ENCODE measurements at regions of chr3 and their contacts with region 1.

Region 1: GRCh38 chr3:194344012-194344411 is 7.1 kb downstream of the CPN2 start:
- DNase-seq: peak; percentile 28 to 82 (median 60)
- ATAC-seq: peak; percentile 59 to 65 (median 64)
- H3K4me3 ChIP-seq: no peak overlapping the region
- H3K4me3 Mint-ChIP-seq: no peak overlapping the region
- H3K27ac ChIP-seq: no peak overlapping the region
- H3K27ac Mint-ChIP-seq: no peak overlapping the region
- H3K4me1 ChIP-seq: no peaks in the 10 kb centered on the region
- H3K4me1 Mint-ChIP-seq: peaks cover 0 to 3% (median 2%) of the 10 kb centered on the region in 3 donors
- H3K27me3 ChIP-seq: peaks cover 0 to 46% of the 10 kb centered on the region in 2 experiments
- H3K27me3 Mint-ChIP-seq: peaks cover 5 to 25% of the 10 kb centered on the region in 2 donors

Region 2: GRCh38 chr3:194333212-194333980 is 10.6 kb before region 1 on chr3:
- CTCF ChIA-PET with region 1: interaction called, 10 to 16 read pairs
- POLR2A ChIA-PET with region 1: interaction called in 1 of 2 experiments, 3 read pairs
- DNase-seq: peak; percentile 68 to 91 (median 84)
- ATAC-seq: peak; percentile 95 to 99 (median 96)
- H3K4me3 ChIP-seq: peak overlapping the region; percentile 29 to 63
- H3K4me3 Mint-ChIP-seq: peak overlapping the region; percentile 49 to 68 (median 51)
- H3K27ac ChIP-seq: no peak overlapping the region
- H3K27ac Mint-ChIP-seq: no peak overlapping the region
- H3K4me1 ChIP-seq: peaks cover 0 to 10% of the 10 kb centered on the region in 2 experiments
- H3K4me1 Mint-ChIP-seq: peaks cover 4 to 8% (median 7%) of the 10 kb centered on the region in 3 donors
- H3K27me3 ChIP-seq: peaks cover 3 to 48% of the 10 kb centered on the region in 2 experiments
- H3K27me3 Mint-ChIP-seq: peaks cover 11 to 36% of the 10 kb centered on the region in 2 donors

Region 3: GRCh38 chr3:194395778-194396547 is 52.0 kb after region 1 on chr3:
- CTCF ChIA-PET with region 1: interaction called, 7 to 10 read pairs
- POLR2A ChIA-PET with region 1: interaction called in 1 of 2 experiments, 5 read pairs
- DNase-seq: peak; percentile 22 to 83 (median 67)
- ATAC-seq: peak; percentile 63 to 79 (median 68)
- H3K4me3 ChIP-seq: peak overlapping the region; percentile 55 to 79
- H3K4me3 Mint-ChIP-seq: peak overlapping the region; percentile 74 to 95 (median 77)
- H3K27ac ChIP-seq: no peak overlapping the region
- H3K27ac Mint-ChIP-seq: peak overlapping the region; percentile 84 to 88
- H3K4me1 ChIP-seq: peaks cover 9 to 40% of the 10 kb centered on the region in 2 experiments
- H3K4me1 Mint-ChIP-seq: peaks cover 45 to 56% (median 55%) of the 10 kb centered on the region in 3 donors
- H3K27me3 ChIP-seq: peaks cover 0 to 20% of the 10 kb centered on the region in 2 experiments
- H3K27me3 Mint-ChIP-seq: peaks cover 0 to 19% of the 10 kb centered on the region in 2 donors

Region 4: DNA sequence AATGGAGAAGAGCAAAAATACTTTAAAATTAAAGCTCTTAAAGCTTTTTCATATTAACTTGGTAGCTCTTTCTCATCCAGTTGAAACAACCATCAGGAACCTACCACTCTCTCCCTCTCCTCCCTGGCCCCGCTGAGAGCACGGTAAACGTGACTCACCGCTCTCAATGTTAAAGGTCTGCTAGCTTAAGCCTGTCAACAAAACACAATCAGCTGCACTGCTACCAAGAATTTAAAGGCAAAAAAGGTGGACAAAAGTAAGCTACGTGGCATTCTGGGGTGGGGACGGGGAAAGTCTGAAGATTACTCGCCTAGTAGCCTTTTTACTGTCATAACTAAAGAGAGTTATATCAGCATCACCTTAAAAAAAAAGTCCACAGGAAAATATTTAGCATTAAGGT is 63.4 kb after region 1 on chr3:
- CTCF ChIA-PET with region 1: interaction called, 7 to 11 read pairs
- POLR2A ChIA-PET with region 1: interaction called in 1 of 2 experiments, 3 read pairs
- DNase-seq: no peak
- ATAC-seq: no peak
- H3K4me3 ChIP-seq: no peak overlapping the region
- H3K4me3 Mint-ChIP-seq: no peak overlapping the region
- H3K27ac ChIP-seq: no peak overlapping the region
- H3K27ac Mint-ChIP-seq: no peak overlapping the region
- H3K4me1 ChIP-seq: no peaks in the 10 kb centered on the region
- H3K4me1 Mint-ChIP-seq: peaks cover 0 to 8% (median 4%) of the 10 kb centered on the region in 3 donors
- H3K27me3 ChIP-seq: no peaks in the 10 kb centered on the region
- H3K27me3 Mint-ChIP-seq: no peaks in the 10 kb centered on the region